ENCODE measurements at regions of chr21 and their contacts with region 1.

Region 1: GRCh38 chr21:44801468-44802395 is at the start of gene UBE2G2:
- DNase-seq: peak; percentile 92
- ATAC-seq: peak; percentile 95
- H3K4me3 Mint-ChIP-seq: peak within 1 kb of the TSS; percentile 99
- H3K27ac Mint-ChIP-seq: peak within 1 kb of the TSS; percentile 91
- H3K4me1 Mint-ChIP-seq: peaks cover 41% of the 10 kb centered on the region
- H3K27me3 Mint-ChIP-seq: no peaks in the 10 kb centered on the region
- CTCF ChIP-seq: no peak
- total RNA-seq, gene UBE2G2: 102 and 108 TPM in 2 replicates

Region 2: GRCh38 chr21:44761011-44761729 is 40.6 kb before region 1 on chr21:
- CTCF ChIA-PET with region 1: no interaction called
- POLR2A ChIA-PET with region 1: no interaction called
- intact Hi-C with region 1: no loop called
- DNase-seq: no peak
- ATAC-seq: no peak
- H3K4me3 Mint-ChIP-seq: no peak overlapping the region
- H3K27ac Mint-ChIP-seq: no peak overlapping the region
- H3K4me1 Mint-ChIP-seq: peaks cover 7% of the 10 kb centered on the region
- H3K27me3 Mint-ChIP-seq: no peaks in the 10 kb centered on the region
- CTCF ChIP-seq: no peak

Region 3: GRCh38 chr21:44817506-44817880 is 15.8 kb after region 1 on chr21:
- CTCF ChIA-PET with region 1: interaction called, 3 read pairs
- POLR2A ChIA-PET with region 1: interaction called, 16 read pairs
- intact Hi-C with region 1: loop called (anchors 1 kb)
- DNase-seq: peak; percentile 89
- ATAC-seq: peak; percentile 93
- H3K4me3 Mint-ChIP-seq: peak overlapping the region; percentile 53
- H3K27ac Mint-ChIP-seq: no peak overlapping the region
- H3K4me1 Mint-ChIP-seq: peaks cover 12% of the 10 kb centered on the region
- H3K27me3 Mint-ChIP-seq: no peaks in the 10 kb centered on the region
- CTCF ChIP-seq: no peak

Region 4: DNA sequence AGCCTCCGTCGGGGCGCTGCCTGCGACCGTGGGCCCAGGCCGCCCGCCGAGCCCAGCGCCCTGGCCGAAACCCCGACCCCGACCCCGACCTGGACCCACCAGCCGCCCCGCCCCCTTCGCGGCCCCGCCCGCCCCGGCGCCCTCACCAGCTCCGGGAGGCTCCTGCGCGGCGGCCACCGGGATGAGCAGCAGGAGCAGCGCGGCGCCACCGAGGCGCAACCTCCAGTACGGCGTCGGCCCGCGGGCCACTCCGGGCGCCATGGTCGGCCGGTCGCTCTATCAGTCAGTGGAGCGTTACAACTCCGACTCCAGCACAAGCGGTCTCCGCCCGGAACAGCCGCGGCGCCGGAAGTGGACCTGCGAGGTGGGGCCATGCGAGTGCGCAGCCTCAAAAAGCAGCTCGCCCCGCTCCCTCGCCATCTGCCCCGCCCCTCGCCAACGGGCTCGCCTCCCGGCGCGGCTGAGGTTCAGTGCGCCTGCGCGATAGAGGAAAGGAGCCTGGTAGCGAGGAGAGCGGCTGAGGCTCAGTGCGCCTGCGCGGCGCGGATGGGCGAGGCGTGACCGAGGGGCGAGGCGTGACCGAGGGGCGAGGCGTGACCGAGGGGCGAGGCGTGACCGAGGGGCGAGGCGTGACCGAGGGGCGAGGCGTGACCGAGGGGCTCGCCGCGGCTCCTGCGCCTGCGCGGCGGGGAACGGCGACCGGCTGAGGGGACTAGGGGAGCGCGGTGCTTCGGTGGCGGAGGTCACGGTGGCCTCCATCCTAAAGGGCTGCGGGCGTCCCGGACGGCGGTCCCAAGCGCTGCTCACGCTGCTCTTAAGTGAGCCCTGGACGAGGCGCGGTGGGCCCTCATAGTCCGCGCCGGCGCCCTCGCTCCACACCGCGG is 71.9 kb after region 1 on chr21 and contains the start of gene PTTG1IP:
- CTCF ChIA-PET with region 1: interaction called, 7 read pairs
- POLR2A ChIA-PET with region 1: interaction called, 16 read pairs
- intact Hi-C with region 1: loop called (anchors 1 kb)
- DNase-seq: peak; percentile 98
- ATAC-seq: peak; percentile 81
- H3K4me3 Mint-ChIP-seq: peak within 1 kb of the TSS; percentile 92
- H3K27ac Mint-ChIP-seq: peak within 1 kb of the TSS; percentile 92
- H3K4me1 Mint-ChIP-seq: peaks cover 63% of the 10 kb centered on the region
- H3K27me3 Mint-ChIP-seq: no peaks in the 10 kb centered on the region
- CTCF ChIP-seq: no peak
- total RNA-seq, gene PTTG1IP: 35.3 and 36.6 TPM in 2 replicates

Region 5: GRCh38 chr21:44933611-44934191 is 132.0 kb after region 1 on chr21:
- CTCF ChIA-PET with region 1: interaction called, 46 read pairs
- POLR2A ChIA-PET with region 1: interaction called, 23 read pairs
- intact Hi-C with region 1: loop called (anchors 1 kb)
- DNase-seq: no peak
- ATAC-seq: no peak
- H3K4me3 Mint-ChIP-seq: peak overlapping the region; percentile 41
- H3K27ac Mint-ChIP-seq: no peak overlapping the region
- H3K4me1 Mint-ChIP-seq: peaks cover 37% of the 10 kb centered on the region
- H3K27me3 Mint-ChIP-seq: no peaks in the 10 kb centered on the region
- CTCF ChIP-seq: no peak

Region 6: GRCh38 chr21:45439161-45439872 is 637.6 kb after region 1 on chr21:
- CTCF ChIA-PET with region 1: no interaction called
- POLR2A ChIA-PET with region 1: no interaction called
- intact Hi-C with region 1: loop called (anchors 2 kb)
- DNase-seq: peak; percentile 81
- ATAC-seq: peak; percentile 83
- H3K4me3 Mint-ChIP-seq: peak overlapping the region; percentile 66
- H3K27ac Mint-ChIP-seq: no peak overlapping the region
- H3K4me1 Mint-ChIP-seq: peaks cover 4% of the 10 kb centered on the region
- H3K27me3 Mint-ChIP-seq: peaks cover 15% of the 10 kb centered on the region
- CTCF ChIP-seq: no peak

Measured in activated B cell treated with CpG ODN at 0.5 μM for 24 hours (primary cell).